ENCODE measurements at regions of chr3 and their contacts with region 1.

Region 1: DNA sequence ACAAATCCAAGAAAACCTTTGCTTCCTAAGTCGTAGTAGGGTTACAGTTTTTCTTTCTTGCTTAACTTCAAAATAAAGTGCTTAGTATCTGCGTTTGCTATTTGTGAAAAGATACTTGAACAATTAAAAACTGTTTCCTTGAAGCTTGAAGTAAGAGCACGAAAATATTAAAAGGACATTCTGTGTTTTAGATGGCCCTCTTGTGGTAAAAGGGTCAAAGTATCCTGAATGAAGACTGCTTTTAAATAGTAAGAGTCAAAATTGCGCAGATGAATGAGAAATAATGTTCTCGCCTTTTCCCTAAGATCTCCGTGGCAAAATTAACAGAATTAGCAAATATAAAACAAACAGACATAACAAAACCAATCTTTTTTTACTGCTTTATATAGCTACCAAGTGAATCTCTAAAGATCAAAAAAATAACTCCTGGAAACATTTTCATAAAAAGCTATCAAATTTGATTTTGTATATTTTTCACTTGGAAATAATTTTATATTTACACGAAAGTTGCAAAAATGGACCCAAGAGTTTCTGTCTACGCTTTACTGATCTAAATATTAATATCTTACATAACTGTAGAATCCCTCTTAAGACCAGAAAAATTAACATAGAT is 175.4 kb downstream of the MBNL1 start:
- DNase-seq: peak; percentile 69 to 80 (median 79)
- H3K4me3 ChIP-seq: no peak overlapping the region
- H3K27ac ChIP-seq: no peak overlapping the region
- H3K4me1 ChIP-seq: peaks cover 6 to 29% (median 12%) of the 10 kb centered on the region in 4 experiments
- H3K27me3 ChIP-seq: no peaks in the 10 kb centered on the region

Region 2: GRCh38 chr3:152071924-152072323 is 372.2 kb before region 1 on chr3:
- CTCF ChIA-PET with region 1: interaction called, 25 read pairs
- POLR2A ChIA-PET with region 1: no interaction called
- DNase-seq: peak; percentile 52 to 78 (median 76)
- H3K4me3 ChIP-seq: no peak overlapping the region
- H3K27ac ChIP-seq: no peak overlapping the region
- H3K4me1 ChIP-seq: no peaks in the 10 kb centered on the region
- H3K27me3 ChIP-seq: no peaks in the 10 kb centered on the region

Region 3: DNA sequence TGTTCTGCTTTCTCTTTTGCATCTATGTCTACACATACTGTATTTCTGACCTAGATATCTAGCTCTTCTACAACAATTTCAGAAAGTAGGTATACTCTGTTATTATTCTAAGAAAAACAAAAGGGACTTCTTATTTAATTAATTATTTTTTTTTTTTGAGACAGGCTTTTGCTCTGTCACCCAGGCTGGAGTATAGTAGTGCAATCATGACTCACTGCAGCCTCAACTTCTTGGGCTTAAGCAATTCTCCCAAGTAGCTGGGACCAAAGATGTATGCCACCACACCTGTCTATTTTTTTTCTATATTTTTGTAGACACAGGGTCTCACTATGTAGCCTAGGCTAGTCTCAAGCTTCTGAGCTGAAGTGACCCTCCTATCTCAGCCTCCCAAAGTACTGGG is 44.8 kb before region 1 on chr3:
- CTCF ChIA-PET with region 1: interaction called, 11 read pairs
- POLR2A ChIA-PET with region 1: no interaction called
- DNase-seq: peak; percentile 29 to 76 (median 67)
- H3K4me3 ChIP-seq: no peak overlapping the region
- H3K27ac ChIP-seq: peak overlapping the region in 1 of 2 experiments; percentile 26
- H3K4me1 ChIP-seq: peaks cover 12 to 40% (median 17%) of the 10 kb centered on the region in 4 experiments
- H3K27me3 ChIP-seq: no peaks in the 10 kb centered on the region

Region 4: DNA sequence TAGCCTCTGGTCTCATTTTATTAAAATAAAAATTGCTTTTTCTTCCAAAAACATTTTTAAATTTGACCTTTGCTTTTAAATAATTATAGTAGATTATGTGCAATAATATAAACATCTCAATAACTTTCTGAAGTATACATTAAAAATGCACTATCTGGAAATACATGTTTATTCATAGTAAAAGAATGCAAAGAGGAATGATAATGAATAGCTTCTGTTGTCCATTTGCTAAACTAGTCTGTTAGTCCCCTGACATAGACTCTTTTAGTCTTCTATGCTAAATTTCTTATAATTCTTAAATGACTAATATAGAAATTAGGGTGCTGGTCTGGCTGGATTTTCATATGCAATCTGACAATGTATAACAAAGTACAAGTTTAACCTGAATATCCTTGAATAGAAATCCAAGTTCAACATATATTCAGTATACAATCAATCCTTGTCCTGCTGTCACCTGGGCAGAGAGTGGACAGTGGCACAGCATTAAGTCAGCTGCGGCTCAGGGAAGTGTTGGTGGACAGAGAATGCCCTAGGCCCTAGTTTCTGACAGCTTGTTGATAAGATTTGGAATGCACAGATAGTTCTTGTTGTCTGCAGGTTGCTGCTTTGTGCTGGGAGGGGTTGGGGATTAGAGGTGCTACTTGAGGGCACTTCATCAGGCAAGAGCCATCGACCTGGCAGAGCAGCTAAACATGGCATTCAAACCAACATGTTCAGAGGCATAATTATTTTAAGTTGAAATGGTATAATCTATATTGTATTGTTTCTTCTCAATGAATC is 13.7 kb before region 1 on chr3:
- CTCF ChIA-PET with region 1: interaction called, 19 read pairs
- POLR2A ChIA-PET with region 1: no interaction called
- DNase-seq: no peak
- H3K4me3 ChIP-seq: no peak overlapping the region
- H3K27ac ChIP-seq: peak overlapping the region in 1 of 2 experiments; percentile 31
- H3K4me1 ChIP-seq: peaks cover 0 to under 1% (median under 1%) of the 10 kb centered on the region in 4 experiments
- H3K27me3 ChIP-seq: no peaks in the 10 kb centered on the region

Region 5: GRCh38 chr3:152458376-152459117 is 14.4 kb after region 1 on chr3:
- CTCF ChIA-PET with region 1: interaction called, 14 read pairs
- POLR2A ChIA-PET with region 1: interaction called, 3 read pairs
- DNase-seq: peak in 2 of 3 donors; percentile 47 to 56
- H3K4me3 ChIP-seq: no peak overlapping the region
- H3K27ac ChIP-seq: peak overlapping the region in 1 of 2 experiments; percentile 46
- H3K4me1 ChIP-seq: peaks cover 0 to 9% (median 5%) of the 10 kb centered on the region in 4 experiments
- H3K27me3 ChIP-seq: no peaks in the 10 kb centered on the region

Measured in common myeloid progenitor, CD34-positive (primary cell).